Esophagus muscularis mucosa (tissue), 4 donors: ENCODE measurements at regions of chr7 and their contacts with region 1.

Region 1: DNA sequence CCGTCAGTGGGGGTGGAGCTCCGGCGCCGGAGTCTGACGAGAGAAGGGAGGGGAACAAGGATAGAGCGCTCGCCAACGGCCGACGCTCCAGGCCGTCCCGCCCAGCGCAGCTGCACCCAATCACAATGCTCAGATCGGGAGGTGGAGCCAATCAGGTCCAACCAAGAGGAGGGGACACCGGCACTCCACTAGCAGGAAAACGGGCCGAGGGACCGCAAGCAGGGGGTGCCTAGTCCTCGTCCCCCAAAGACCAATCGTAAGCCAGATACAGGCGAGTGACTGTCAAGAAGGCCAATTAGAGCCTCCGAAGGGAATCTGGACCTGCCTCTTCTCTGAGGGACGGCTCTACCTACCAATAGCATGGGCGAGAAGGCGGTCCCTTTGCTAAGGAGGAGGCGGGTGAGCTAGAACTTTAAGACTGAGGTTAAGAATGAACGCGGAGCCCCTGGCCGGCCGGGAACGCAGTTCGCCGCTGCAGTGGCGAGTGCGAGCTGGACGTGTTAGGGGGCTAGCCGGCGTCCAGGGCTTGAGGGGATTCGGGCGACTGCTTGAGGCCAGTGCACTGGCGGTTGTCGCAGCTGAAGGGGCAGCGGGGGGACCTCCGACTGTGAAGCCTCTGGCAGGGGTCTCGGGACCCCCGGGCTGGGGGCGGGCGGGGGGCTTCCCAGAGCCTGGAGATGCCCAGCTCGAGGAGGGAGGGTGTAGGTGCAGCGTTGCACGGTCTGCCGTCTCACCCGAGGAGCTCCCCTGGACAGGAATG is at the start of gene FBXO24:
- DNase-seq: peak; percentile 100
- H3K4me3 ChIP-seq: peak within 1 kb of the TSS; percentile 87 to 100 (median 94)
- H3K27ac ChIP-seq: peak within 1 kb of the TSS; percentile 90 to 96 (median 94)
- H3K4me1 ChIP-seq: peaks cover 36 to 63% (median 49%) of the 10 kb centered on the region in 4 donors
- H3K27me3 ChIP-seq: peaks cover 0 to 14% (median 0%) of the 10 kb centered on the region in 4 donors
- CTCF ChIP-seq: no peak
- EP300 ChIP-seq: no peak
- POLR2A ChIP-seq: no peak
- total RNA-seq, gene FBXO24: 0.13 to 0.83 (median 0.48) TPM

Region 2: DNA sequence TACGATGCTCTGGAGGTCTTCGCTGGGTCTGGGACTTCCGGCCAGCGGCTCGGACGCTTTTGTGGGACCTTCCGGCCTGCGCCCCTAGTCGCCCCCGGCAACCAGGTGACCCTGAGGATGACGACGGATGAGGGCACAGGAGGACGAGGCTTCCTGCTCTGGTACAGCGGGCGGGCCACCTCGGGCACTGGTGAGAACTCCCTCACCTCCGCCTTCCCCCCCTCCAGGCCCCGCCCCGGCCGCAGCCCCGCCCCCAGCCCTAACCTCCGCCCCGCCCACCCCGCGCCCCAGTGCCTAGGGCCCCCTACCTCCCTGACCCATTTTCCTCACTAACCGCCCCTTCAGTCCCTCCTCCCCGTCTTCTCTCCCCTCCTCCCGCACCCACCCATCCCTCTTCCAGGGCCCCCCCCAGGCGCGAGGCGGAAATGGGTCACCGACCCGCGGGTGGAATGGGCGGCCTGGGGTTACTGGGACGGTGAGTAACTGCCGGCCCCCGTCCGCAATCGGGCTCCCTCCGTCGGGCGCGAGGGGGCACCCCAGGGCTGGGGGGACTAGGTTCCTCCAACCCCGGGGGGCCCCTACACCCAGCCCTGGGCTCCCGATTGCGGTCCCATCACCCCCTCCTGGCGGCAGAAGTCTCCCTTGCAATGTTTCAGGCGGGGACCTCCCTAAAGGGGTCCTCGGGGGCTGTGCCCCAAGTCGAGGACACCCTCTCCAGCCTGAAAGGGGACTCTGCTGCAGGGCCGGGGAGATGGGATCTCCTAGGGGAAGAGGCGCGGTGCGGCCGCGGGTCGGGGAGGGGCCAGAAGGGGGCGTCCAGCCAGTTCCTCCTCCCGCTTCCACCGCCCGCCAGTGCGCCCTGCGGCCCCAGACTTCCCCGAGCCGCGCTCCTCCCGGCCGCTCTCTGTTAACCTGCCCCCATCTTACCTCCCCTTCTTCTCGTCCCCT is 17.9 kb after region 1 on chr7:
- intact Hi-C with region 1: loop called (anchors 2 kb)
- DNase-seq: no peak
- H3K4me3 ChIP-seq: peak overlapping the region; percentile 66 to 90 (median 74)
- H3K27ac ChIP-seq: peak overlapping the region; percentile 84 to 89 (median 86)
- H3K4me1 ChIP-seq: peaks cover 20 to 48% (median 43%) of the 10 kb centered on the region in 4 donors
- H3K27me3 ChIP-seq: no peaks in the 10 kb centered on the region
- CTCF ChIP-seq: peak; percentile 27 to 45 (median 39)
- EP300 ChIP-seq: no peak
- POLR2A ChIP-seq: peak; percentile 45